Panc1 (cell line): ENCODE measurements at regions of chr19 and their contacts with region 1.

Region 1: GRCh38 chr19:5934774-5935472 is 20.9 kb downstream of the CAPS start:
- DNase-seq: no peak
- ATAC-seq: no peak
- H3K4me3 ChIP-seq: no peak overlapping the region
- H3K27ac ChIP-seq: no peak overlapping the region
- H3K4me1 ChIP-seq: no peaks in the 10 kb centered on the region; the same call in 1 of the 2 replicates
- H3K27me3 ChIP-seq: no peaks in the 10 kb centered on the region
- CTCF ChIP-seq: no peak

Region 2: GRCh38 chr19:5624018-5624663 is 310.8 kb before region 1 on chr19:
- CTCF ChIA-PET with region 1: no interaction called
- POLR2A ChIA-PET with region 1: interaction called, 18 read pairs
- in situ Hi-C with region 1: no loop called
- intact Hi-C with region 1: no loop called
- DNase-seq: no peak
- ATAC-seq: no peak
- H3K4me3 ChIP-seq: peak overlapping the region; percentile 92 to 99
- H3K27ac ChIP-seq: peak overlapping the region; percentile 93
- H3K4me1 ChIP-seq: peaks cover 18% of the 10 kb centered on the region
- H3K27me3 ChIP-seq: no peaks in the 10 kb centered on the region
- CTCF ChIP-seq: no peak

Region 3: DNA sequence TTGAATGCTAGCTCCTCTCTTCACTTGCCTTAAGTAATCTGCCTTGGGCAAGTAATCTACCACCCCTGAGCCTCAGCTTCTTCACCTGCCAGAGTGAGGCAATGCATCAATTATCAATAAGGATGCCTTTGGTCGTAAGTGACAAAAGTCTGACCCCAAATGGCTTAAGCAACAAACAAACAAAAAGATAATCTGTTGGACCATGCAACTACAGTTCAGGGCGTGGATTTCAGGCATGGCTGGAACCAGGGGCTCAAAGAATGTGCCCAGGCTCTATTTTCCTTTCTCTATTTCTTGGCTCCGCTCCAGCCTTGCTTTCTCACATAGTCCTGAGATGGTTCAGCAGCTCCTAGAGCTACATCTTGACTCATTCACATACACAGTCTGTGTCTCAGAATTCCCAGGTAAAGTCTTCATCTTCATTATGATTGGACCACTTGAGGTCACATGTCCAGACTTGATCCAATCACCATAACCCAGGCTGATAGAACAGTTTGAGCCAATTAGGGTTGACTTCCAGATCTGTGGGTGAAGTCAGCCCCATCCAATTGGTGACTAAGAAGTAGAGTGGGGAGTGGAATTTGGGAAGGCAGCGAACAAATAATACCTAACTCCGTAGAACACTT is 230.1 kb after region 1 on chr19:
- CTCF ChIA-PET with region 1: no interaction called
- POLR2A ChIA-PET with region 1: interaction called, 20 read pairs
- in situ Hi-C with region 1: no loop called
- intact Hi-C with region 1: no loop called
- DNase-seq: no peak
- ATAC-seq: no peak
- H3K4me3 ChIP-seq: no peak overlapping the region
- H3K27ac ChIP-seq: no peak overlapping the region
- H3K4me1 ChIP-seq: no peaks in the 10 kb centered on the region
- H3K27me3 ChIP-seq: no peaks in the 10 kb centered on the region
- CTCF ChIP-seq: no peak